Activated B cell treated with CpG ODN at 0.5 μM for 24 hours (primary cell): ENCODE measurements at regions of chr1 and their contacts with region 1.

Region 1: GRCh38 chr1:84944767-84945486 is 51.9 kb upstream of the LPAR3 start:
- DNase-seq: peak; percentile 26
- ATAC-seq: peak; percentile 93
- H3K4me3 Mint-ChIP-seq: peak overlapping the region; percentile 86
- H3K27ac Mint-ChIP-seq: peak overlapping the region; percentile 95
- H3K4me1 Mint-ChIP-seq: peaks cover 17% of the 10 kb centered on the region
- H3K27me3 Mint-ChIP-seq: no peaks in the 10 kb centered on the region
- CTCF ChIP-seq: peak; percentile 100

Region 2: GRCh38 chr1:84298328-84298683 is 646.6 kb before region 1 on chr1:
- CTCF ChIA-PET with region 1: no interaction called
- POLR2A ChIA-PET with region 1: no interaction called
- intact Hi-C with region 1: loop called (anchors 5 kb)
- DNase-seq: peak; percentile 58
- ATAC-seq: peak; percentile 91
- H3K4me3 Mint-ChIP-seq: peak overlapping the region; percentile 90
- H3K27ac Mint-ChIP-seq: peak overlapping the region; percentile 74
- H3K4me1 Mint-ChIP-seq: peaks cover 34% of the 10 kb centered on the region
- H3K27me3 Mint-ChIP-seq: peaks cover 8% of the 10 kb centered on the region
- CTCF ChIP-seq: no peak

Region 3: DNA sequence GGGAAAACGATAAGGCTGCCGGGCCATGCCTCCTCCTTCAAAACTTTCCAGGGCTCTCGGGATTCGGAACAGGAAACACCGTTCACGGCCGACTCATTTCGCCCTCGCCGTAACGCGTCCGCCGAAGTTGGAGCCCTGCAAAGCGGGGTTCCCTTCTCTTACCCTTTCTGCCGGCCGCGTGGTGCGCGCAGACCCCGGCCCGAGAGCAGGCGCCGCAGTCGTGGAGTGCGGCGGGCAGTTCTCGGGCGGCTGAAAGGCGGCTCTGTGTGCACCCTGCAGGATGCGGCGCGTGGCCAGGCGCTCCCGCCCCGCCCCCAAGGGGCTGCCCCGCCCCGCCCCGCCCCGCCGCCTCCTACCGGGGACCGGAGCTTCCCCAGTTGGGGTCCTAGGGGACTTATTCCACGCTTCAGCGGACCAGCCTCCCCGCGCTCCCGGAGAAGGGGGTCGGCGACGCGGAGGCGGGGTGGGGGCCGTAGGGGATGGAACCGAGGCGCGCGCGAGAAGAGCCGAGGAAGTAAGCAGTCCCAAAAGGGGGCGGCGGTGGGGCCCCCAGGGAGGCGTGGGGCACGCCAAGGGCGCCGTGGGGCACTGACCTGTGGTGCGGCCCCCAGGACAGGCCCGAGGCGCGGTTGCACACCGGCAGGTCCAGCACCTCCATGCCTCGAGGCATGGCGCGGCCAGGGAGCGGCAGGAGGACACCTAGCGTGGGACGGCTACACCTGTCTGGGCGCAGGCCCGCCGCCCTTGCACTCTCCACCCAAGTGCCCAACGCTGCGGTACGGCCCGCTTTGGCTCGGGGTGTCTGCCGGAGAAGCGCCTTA is 52.1 kb after region 1 on chr1 and contains the start of gene MCOLN2:
- CTCF ChIA-PET with region 1: interaction called, 42 read pairs
- POLR2A ChIA-PET with region 1: interaction called, 12 read pairs
- intact Hi-C with region 1: loop called (anchors 1 kb)
- DNase-seq: peak; percentile 60
- ATAC-seq: peak; percentile 67
- H3K4me3 Mint-ChIP-seq: peak within 1 kb of the TSS; percentile 85
- H3K27ac Mint-ChIP-seq: peak within 1 kb of the TSS; percentile 87
- H3K4me1 Mint-ChIP-seq: peaks cover 63% of the 10 kb centered on the region
- H3K27me3 Mint-ChIP-seq: peaks cover 2% of the 10 kb centered on the region
- CTCF ChIP-seq: no peak
- total RNA-seq, gene MCOLN2: 60.1 and 80.2 TPM in 2 replicates

Region 4: GRCh38 chr1:85033221-85033620 is 88.3 kb after region 1 on chr1:
- CTCF ChIA-PET with region 1: interaction called, 366 read pairs
- POLR2A ChIA-PET with region 1: interaction called, 32 read pairs
- intact Hi-C with region 1: no loop called
- DNase-seq: no peak
- ATAC-seq: no peak
- H3K4me3 Mint-ChIP-seq: no peak overlapping the region
- H3K27ac Mint-ChIP-seq: no peak overlapping the region
- H3K4me1 Mint-ChIP-seq: no peaks in the 10 kb centered on the region
- H3K27me3 Mint-ChIP-seq: peaks cover 8% of the 10 kb centered on the region
- CTCF ChIP-seq: no peak

Region 5: DNA sequence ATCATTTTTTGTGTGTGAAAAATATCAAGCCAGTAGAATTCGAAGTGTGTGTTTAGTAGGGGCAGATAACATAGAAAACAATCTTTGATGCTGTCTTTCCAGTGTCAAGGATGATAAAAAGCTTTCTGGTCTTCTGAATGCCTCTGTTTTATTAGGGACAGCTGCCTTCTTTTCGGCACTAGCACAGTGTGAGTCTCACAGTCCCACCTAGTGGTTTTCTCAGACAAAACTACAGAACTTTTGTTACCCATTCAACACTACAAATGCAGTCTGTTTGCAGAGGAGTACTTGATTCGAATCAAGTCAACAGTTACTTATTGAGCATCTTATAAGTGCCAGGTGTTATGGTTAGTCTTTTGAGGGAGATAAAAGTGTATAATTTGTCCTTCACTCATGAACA is 134.0 kb after region 1 on chr1:
- CTCF ChIA-PET with region 1: interaction called, 12 read pairs
- POLR2A ChIA-PET with region 1: no interaction called
- intact Hi-C with region 1: loop called (anchors 1 kb)
- DNase-seq: no peak
- ATAC-seq: no peak
- H3K4me3 Mint-ChIP-seq: no peak overlapping the region
- H3K27ac Mint-ChIP-seq: no peak overlapping the region
- H3K4me1 Mint-ChIP-seq: no peaks in the 10 kb centered on the region
- H3K27me3 Mint-ChIP-seq: peaks cover 17% of the 10 kb centered on the region
- CTCF ChIP-seq: no peak

Region 6: DNA sequence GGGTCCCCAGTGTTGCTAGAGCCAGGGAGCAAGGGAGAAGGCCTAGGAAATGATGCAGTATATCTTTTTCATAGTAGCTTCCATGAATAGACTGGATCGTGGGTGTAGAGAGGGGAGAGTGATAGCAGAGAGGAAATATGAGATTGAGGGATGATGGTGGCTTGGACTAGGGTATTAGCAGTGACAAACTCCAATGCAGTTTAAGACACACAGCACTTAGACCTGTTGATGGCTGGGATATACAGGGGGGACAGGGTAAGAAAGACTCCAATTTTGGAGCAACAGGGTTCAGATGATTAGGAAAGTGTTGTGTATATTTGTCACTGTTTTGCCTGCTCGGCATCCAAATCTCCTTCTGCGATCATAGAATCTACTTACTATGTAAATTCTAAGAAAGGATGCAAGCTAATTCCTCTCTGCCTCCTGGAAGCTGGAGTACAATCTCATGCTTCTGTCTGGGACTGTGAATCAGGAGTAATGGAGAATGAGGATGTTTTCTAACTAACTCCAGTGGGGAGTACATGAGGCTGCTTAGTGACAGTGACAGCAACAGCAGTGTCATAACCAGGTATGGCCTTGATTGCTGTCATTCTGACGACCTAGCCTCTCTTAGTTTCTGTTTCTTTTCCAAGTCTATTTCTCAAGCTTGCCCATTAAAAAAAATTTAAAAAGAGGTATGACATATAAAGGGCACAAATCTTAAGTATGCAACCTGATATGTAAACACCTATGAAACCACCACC is 208.4 kb after region 1 on chr1:
- CTCF ChIA-PET with region 1: no interaction called
- POLR2A ChIA-PET with region 1: no interaction called
- intact Hi-C with region 1: no loop called
- DNase-seq: no peak
- ATAC-seq: no peak
- H3K4me3 Mint-ChIP-seq: no peak overlapping the region
- H3K27ac Mint-ChIP-seq: no peak overlapping the region
- H3K4me1 Mint-ChIP-seq: no peaks in the 10 kb centered on the region
- H3K27me3 Mint-ChIP-seq: peaks cover 2% of the 10 kb centered on the region
- CTCF ChIP-seq: no peak

Region 7: DNA sequence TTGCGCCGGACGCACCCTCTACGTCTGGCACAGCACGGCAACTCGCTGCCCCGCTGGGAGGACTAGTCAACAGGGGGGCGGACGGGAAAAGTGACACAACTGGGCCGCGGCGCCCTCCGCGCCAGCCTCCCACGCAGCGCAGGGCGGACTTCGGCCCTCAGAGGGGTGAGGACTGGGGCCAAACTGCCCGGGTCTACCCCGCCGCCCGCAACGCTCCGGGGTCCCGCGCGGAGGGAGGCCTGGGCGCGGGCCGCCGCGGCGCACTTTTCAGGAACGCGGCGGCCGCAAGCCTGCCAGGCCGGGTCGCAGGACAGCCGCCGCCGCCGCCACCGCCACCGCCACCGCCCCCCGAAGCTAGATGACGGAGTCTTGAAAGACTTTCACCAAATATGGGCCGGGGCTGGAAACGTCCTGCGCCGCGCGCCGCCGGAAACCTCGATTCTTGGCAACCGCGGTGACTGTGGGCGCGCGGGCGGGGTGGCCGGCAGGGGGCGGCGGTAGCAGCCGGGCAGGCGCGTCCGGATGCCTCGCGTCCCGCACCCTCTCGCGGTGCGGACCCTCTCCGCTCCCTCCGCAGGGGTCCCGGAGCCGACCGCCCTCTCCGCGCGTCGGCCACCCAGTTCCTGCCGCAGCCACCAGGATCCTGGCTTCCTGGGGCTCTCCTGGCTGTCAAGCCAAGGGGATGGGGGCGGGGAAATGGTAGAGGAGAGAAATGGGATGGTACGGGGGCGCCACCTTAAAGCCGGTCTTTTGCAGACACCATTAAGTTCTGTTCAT is 631.9 kb after region 1 on chr1:
- CTCF ChIA-PET with region 1: no interaction called
- POLR2A ChIA-PET with region 1: no interaction called
- intact Hi-C with region 1: loop called (anchors 10 kb)
- DNase-seq: peak; percentile 42
- ATAC-seq: peak; percentile 77
- H3K4me3 Mint-ChIP-seq: peak overlapping the region; percentile 74
- H3K27ac Mint-ChIP-seq: no peak overlapping the region
- H3K4me1 Mint-ChIP-seq: peaks cover 32% of the 10 kb centered on the region
- H3K27me3 Mint-ChIP-seq: peaks cover 62% of the 10 kb centered on the region
- CTCF ChIP-seq: no peak